ENCODE measurements at regions of chr1 and their contacts with region 1.

Region 1: GRCh38 chr1:110630839-110631663 is 24.9 kb upstream of the KCNA2 start:
- DNase-seq: peak; percentile 58
- H3K4me3 ChIP-seq: no peak overlapping the region
- H3K27ac ChIP-seq: no peak overlapping the region
- H3K4me1 ChIP-seq: no peaks in the 10 kb centered on the region
- H3K27me3 ChIP-seq: no peaks in the 10 kb centered on the region
- CTCF ChIP-seq: peak; percentile 74 to 90

Region 2: DNA sequence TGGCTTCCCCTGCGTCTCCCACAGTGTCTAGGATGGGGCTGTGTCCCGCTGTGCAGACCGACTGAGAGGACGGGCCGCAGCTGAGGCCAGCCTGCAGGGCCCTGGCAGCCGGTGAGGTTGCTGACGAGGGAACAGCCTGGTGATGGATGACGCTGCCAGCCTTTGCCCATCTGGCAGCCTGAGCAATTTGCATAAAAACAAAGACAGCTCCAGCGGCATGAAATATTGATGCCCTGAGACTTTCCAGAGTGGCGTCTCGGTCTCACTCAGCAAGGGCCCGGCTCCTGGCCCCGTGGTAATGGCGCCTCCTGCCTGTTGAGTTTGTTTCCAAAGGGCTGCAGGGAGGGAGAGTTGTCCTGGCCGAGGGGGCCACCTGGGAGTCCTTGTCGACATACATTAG is 93.0 kb before region 1 on chr1:
- CTCF ChIA-PET with region 1: no interaction called
- dilution Hi-C with region 1: no loop called
- in situ Hi-C with region 1: no loop called
- intact Hi-C with region 1: no loop called
- DNase-seq: no peak
- H3K4me3 ChIP-seq: no peak overlapping the region
- H3K27ac ChIP-seq: no peak overlapping the region
- H3K4me1 ChIP-seq: no peaks in the 10 kb centered on the region
- H3K27me3 ChIP-seq: no peaks in the 10 kb centered on the region
- CTCF ChIP-seq: no peak

Region 3: GRCh38 chr1:110766025-110766647 is 135.1 kb after region 1 on chr1:
- CTCF ChIA-PET with region 1: no interaction called
- dilution Hi-C with region 1: no loop called
- in situ Hi-C with region 1: no loop called
- intact Hi-C with region 1: loop called (anchors 1 kb)
- DNase-seq: peak; percentile 17
- H3K4me3 ChIP-seq: no peak overlapping the region
- H3K27ac ChIP-seq: no peak overlapping the region
- H3K4me1 ChIP-seq: peaks cover 12% of the 10 kb centered on the region
- H3K27me3 ChIP-seq: no peaks in the 10 kb centered on the region
- CTCF ChIP-seq: peak; percentile 83 to 93

Region 4: GRCh38 chr1:110976089-110976488 is 345.0 kb after region 1 on chr1:
- CTCF ChIA-PET with region 1: no interaction called
- dilution Hi-C with region 1: no loop called
- in situ Hi-C with region 1: loop called in 1 of 2 experiments (anchors 25 kb)
- intact Hi-C with region 1: no loop called
- DNase-seq: no peak
- H3K4me3 ChIP-seq: no peak overlapping the region
- H3K27ac ChIP-seq: no peak overlapping the region
- H3K4me1 ChIP-seq: no peaks in the 10 kb centered on the region
- H3K27me3 ChIP-seq: peaks cover 3% of the 10 kb centered on the region
- CTCF ChIP-seq: no peak

Region 5: DNA sequence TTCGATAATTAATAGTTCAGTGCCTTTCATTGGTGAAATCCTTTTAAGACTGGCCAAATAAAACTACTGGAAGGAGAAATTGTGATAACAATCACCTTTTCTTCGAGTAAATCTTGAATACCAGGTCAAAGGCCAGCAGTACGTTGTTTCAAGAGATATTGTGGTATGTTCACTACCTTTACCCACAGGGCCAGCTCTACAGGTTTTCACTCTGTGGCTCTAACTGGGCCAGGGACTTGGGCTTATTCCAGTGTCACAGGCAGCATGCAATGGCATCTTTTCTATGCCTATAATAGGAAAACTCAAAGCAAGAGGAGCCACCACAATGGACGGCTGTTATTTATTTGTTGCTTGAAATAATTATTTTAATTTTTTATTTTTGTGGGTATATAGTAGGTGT is 359.5 kb after region 1 on chr1:
- CTCF ChIA-PET with region 1: no interaction called
- dilution Hi-C with region 1: no loop called
- in situ Hi-C with region 1: loop called in 1 of 2 experiments (anchors 25 kb)
- intact Hi-C with region 1: loop called (anchors 5 kb)
- DNase-seq: no peak
- H3K4me3 ChIP-seq: no peak overlapping the region
- H3K27ac ChIP-seq: no peak overlapping the region
- H3K4me1 ChIP-seq: peaks cover 11% of the 10 kb centered on the region
- H3K27me3 ChIP-seq: peaks cover 5% of the 10 kb centered on the region
- CTCF ChIP-seq: no peak

Measured in mammary epithelial cell (primary cell).